Activated CD4-positive, alpha-beta memory T cell treated with anti-CD3 and anti-CD28 coated beads, Interleukin-2, amount 10 ng/mL, durations not matched to agents 7 days and 5 days (primary cell): ENCODE measurements at regions of chr5 and their contacts with region 1.

Region 1: DNA sequence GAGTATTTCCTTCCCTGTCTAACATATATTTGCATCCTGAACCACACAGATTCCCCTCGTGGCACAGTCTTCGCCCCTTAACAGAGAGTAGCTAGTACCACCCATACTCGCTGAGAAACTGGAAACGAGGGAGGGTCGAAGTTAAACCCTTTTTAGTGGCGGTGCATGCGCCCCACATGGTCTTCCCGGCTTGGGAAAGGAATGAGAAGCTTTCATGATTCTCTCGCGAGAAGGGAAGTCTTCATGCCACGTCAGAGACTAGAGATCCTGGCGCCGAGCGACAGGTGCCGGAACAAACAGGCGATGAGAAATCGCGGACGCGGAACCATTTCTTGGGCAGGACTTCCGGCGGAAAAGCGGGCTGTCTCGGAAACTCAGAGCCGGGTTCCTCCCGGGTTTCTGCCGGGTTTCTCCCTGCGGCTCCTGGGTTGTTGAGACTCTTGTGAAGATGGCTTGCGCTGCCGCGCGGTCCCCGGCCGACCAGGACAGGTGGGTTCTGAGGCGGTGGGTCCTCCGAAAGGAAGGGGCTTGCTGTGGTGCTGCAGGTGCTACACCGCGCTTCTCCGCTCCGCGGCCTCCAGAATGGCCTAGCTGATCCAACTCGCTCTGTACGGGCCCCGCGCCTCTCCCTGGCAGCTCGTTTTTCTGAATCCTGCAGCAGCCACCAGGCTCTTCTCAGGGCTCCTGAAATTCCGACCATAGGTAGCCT is at the start of gene SRP19:
- DNase-seq: peak; percentile 93
- H3K4me3 Mint-ChIP-seq: peak within 1 kb of the TSS; percentile 95
- H3K27ac Mint-ChIP-seq: peak within 1 kb of the TSS; percentile 90
- H3K4me1 Mint-ChIP-seq: peaks cover 42% of the 10 kb centered on the region
- H3K27me3 Mint-ChIP-seq: peaks cover 3% of the 10 kb centered on the region
- total RNA-seq, gene SRP19: 54.6 to 68.3 TPM

Region 2: GRCh38 chr5:112707187-112708102 is 153.6 kb before region 1 on chr5:
- CTCF ChIA-PET with region 1: no interaction called
- POLR2A ChIA-PET with region 1: interaction called, 13 read pairs
- DNase-seq: peak; percentile 97
- H3K4me3 Mint-ChIP-seq: peak overlapping the region; percentile 90
- H3K27ac Mint-ChIP-seq: peak overlapping the region; percentile 72
- H3K4me1 Mint-ChIP-seq: peaks cover 35% of the 10 kb centered on the region
- H3K27me3 Mint-ChIP-seq: peaks cover 3% of the 10 kb centered on the region

Region 3: DNA sequence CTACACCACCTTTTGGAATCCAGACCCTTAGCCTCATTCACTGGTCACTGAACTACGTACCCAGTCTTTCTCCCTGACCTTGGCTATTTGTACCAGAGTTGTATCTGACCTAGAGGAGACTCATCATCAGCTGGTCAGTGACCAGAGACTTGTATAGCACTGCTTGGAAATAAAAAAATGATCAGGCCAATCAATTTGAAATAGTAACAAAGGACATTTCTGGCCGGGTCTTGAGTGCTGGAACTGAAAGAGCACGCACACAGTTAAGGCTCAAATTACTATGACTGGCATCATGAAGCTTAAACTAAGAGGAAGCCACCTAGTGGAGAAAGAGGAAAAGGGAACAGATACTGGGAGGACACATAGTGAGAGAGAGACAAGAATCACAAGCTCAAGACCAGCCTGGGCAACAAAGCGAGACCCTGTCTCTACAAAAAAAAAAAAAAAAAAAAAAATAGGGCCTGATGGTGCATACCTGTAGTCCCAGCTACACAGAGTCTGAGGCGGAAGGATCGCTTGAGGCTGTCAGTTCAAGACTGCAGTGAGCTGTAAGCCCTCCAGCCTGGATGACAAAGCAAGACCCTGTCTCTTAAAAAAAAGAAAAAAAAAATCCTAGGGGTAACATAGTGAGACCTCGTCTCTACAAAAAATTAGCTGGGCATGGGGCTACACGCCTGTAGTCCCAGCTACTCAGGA is 12.8 kb before region 1 on chr5:
- CTCF ChIA-PET with region 1: interaction called, 29 read pairs
- POLR2A ChIA-PET with region 1: interaction called, 8 read pairs
- DNase-seq: no peak
- H3K4me3 Mint-ChIP-seq: no peak overlapping the region
- H3K27ac Mint-ChIP-seq: no peak overlapping the region
- H3K4me1 Mint-ChIP-seq: peaks cover 3% of the 10 kb centered on the region
- H3K27me3 Mint-ChIP-seq: peaks cover 11% of the 10 kb centered on the region

Region 4: DNA sequence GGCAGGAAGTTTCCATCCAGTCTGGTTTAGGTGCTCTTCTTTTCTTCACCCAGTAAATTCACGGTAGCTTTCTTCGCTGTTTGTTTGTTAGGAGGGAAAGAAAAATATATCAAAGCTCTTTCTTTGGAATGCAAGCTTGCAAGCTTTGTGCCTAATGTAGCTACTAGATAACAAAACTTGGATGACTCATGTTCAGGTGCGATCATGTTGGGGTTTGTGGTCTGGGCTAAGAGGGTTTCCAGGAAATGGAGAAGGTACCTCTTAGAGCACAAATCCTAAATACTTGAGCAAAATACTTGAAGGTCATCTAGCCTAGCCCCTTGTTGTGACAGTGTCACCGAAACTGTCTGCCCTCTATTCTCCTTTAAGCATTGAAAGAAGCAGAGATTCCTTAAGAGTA is 17.7 kb after region 1 on chr5:
- CTCF ChIA-PET with region 1: interaction called, 10 read pairs
- POLR2A ChIA-PET with region 1: interaction called, 14 read pairs
- DNase-seq: peak; percentile 77
- H3K4me3 Mint-ChIP-seq: peak overlapping the region; percentile 35
- H3K27ac Mint-ChIP-seq: peak overlapping the region; percentile 71
- H3K4me1 Mint-ChIP-seq: peaks cover 52% of the 10 kb centered on the region
- H3K27me3 Mint-ChIP-seq: no peaks in the 10 kb centered on the region